CD4-positive, alpha-beta memory T cell (primary cell): ENCODE measurements at regions of chr12 and their contacts with region 1.

Region 1: GRCh38 chr12:8078398-8078797 is 3.7 kb upstream of the NECAP1 start:
- DNase-seq: peak; percentile 74 to 84 (median 79)
- H3K4me3 ChIP-seq: no peak overlapping the region
- H3K4me3 Mint-ChIP-seq: peak overlapping the region in 4 of 8 donors; percentile 12 to 45 (median 16)
- H3K27ac ChIP-seq: peak overlapping the region; percentile 35
- H3K27ac Mint-ChIP-seq: peak overlapping the region; percentile 55 to 98 (median 92)
- H3K4me1 ChIP-seq: peaks cover 35% of the 10 kb centered on the region
- H3K4me1 Mint-ChIP-seq: peaks cover 28 to 66% (median 40%) of the 10 kb centered on the region in 4 donors
- H3K27me3 ChIP-seq: no peaks in the 10 kb centered on the region
- H3K27me3 Mint-ChIP-seq: peaks cover 0 to 2% of the 10 kb centered on the region in 2 donors

Region 2: DNA sequence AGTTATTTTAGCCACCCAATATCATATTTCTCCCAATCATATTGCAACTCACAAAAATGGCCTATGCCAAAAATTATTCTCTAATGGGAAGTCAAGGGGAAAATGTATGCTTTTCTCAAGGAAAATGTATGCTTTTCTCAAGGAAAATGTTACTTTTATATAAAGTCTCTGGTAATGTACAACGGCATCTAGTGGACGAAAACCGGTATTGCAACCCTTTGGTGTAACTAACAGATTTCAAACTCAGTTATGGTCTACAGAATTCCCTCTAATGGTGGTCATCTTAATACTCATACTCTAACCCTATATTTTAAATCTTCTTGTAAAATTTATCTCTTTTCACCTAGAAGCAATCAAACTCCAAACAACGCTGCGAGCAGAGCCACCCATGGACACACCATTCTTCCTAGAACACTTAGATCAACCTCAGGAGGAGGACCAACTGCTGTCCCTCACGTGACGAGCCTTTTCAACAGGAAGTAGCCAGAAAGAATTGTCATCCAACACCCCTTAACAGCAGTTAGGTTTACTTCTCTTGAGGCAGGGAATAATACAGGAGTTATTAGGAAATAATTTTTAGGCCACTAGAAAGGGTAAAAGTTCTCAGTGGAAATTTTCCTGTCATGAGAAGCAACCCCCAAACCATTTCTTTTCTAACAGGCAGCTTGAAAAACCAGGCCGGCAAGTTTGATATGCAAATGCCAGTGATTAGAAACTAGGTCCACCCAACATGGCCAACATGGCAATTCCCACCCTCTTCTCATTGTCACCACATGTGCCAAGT is 432.8 kb before region 1 on chr12:
- CTCF ChIA-PET with region 1: interaction called, 3 read pairs
- POLR2A ChIA-PET with region 1: no interaction called
- intact Hi-C with region 1: loop called (anchors 5 kb)
- DNase-seq: peak in 4 of 5 donors; percentile 24 to 32 (median 30)
- H3K4me3 ChIP-seq: no peak overlapping the region
- H3K4me3 Mint-ChIP-seq: no peak overlapping the region
- H3K27ac ChIP-seq: no peak overlapping the region
- H3K27ac Mint-ChIP-seq: no peak overlapping the region
- H3K4me1 ChIP-seq: peaks cover 11% of the 10 kb centered on the region
- H3K4me1 Mint-ChIP-seq: peaks cover 8 to 15% (median 9%) of the 10 kb centered on the region in 4 donors
- H3K27me3 ChIP-seq: no peaks in the 10 kb centered on the region
- H3K27me3 Mint-ChIP-seq: no peaks in the 10 kb centered on the region

Region 3: GRCh38 chr12:7933255-7933729 is 145.1 kb before region 1 on chr12:
- CTCF ChIA-PET with region 1: interaction called, 35 read pairs
- POLR2A ChIA-PET with region 1: interaction called, 10 read pairs
- intact Hi-C with region 1: loop called (anchors 1 kb)
- DNase-seq: peak; percentile 82 to 87 (median 86)
- H3K4me3 ChIP-seq: peak overlapping the region; percentile 84 to 87
- H3K4me3 Mint-ChIP-seq: no peak overlapping the region
- H3K27ac ChIP-seq: peak overlapping the region; percentile 90
- H3K27ac Mint-ChIP-seq: no peak overlapping the region
- H3K4me1 ChIP-seq: peaks cover 68% of the 10 kb centered on the region
- H3K4me1 Mint-ChIP-seq: peaks cover 22 to 39% (median 30%) of the 10 kb centered on the region in 4 donors
- H3K27me3 ChIP-seq: no peaks in the 10 kb centered on the region
- H3K27me3 Mint-ChIP-seq: no peaks in the 10 kb centered on the region

Region 4: GRCh38 chr12:7995266-7995963 is 83.0 kb before region 1 on chr12:
- CTCF ChIA-PET with region 1: interaction called, 17 read pairs
- POLR2A ChIA-PET with region 1: interaction called, 4 read pairs
- intact Hi-C with region 1: loop called (anchors 1 kb)
- DNase-seq: peak; percentile 81 to 90 (median 86)
- H3K4me3 ChIP-seq: no peak overlapping the region
- H3K4me3 Mint-ChIP-seq: no peak overlapping the region
- H3K27ac ChIP-seq: peak overlapping the region; percentile 1
- H3K27ac Mint-ChIP-seq: no peak overlapping the region
- H3K4me1 ChIP-seq: peaks cover 27% of the 10 kb centered on the region
- H3K4me1 Mint-ChIP-seq: peaks cover 9 to 14% (median 12%) of the 10 kb centered on the region in 4 donors
- H3K27me3 ChIP-seq: no peaks in the 10 kb centered on the region
- H3K27me3 Mint-ChIP-seq: no peaks in the 10 kb centered on the region

Region 5: GRCh38 chr12:8032242-8033152 is 45.9 kb before region 1 on chr12 and contains the start of gene FOXJ2:
- CTCF ChIA-PET with region 1: interaction called, 85 read pairs
- POLR2A ChIA-PET with region 1: interaction called, 23 read pairs
- intact Hi-C with region 1: loop called (anchors 1 kb)
- DNase-seq: peak; percentile 75 to 84 (median 82)
- H3K4me3 ChIP-seq: peak within 1 kb of the TSS; percentile 87 to 95
- H3K4me3 Mint-ChIP-seq: peak within 1 kb of the TSS; percentile 88 to 94 (median 90)
- H3K27ac ChIP-seq: peak within 1 kb of the TSS; percentile 97
- H3K27ac Mint-ChIP-seq: peak within 1 kb of the TSS; percentile 93 to 97 (median 96)
- H3K4me1 ChIP-seq: peaks cover 57% of the 10 kb centered on the region
- H3K4me1 Mint-ChIP-seq: peaks cover 41 to 56% (median 52%) of the 10 kb centered on the region in 4 donors
- H3K27me3 ChIP-seq: no peaks in the 10 kb centered on the region
- H3K27me3 Mint-ChIP-seq: no peaks in the 10 kb centered on the region
- total RNA-seq, gene FOXJ2: 32.4 to 33.4 TPM

Region 6: DNA sequence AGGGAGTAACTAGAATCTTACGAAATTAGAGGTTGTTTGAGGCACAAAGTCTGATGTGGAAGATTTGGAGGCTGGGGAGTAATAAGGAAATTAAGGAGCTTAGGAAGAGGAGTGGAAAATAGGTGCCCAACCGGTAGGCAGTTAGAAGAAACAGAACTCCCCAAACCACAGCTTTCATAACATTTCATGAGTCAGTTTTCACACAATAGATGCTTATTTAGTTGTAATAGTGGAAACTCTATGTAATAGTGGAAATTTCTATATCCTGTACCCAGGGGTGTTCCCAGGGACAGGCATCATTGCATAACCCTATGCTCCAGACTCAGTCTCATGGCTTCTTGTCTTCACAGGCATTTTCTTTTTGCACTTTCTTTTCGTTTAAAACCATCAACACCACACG is 20.6 kb before region 1 on chr12:
- CTCF ChIA-PET with region 1: interaction called, 18 read pairs
- POLR2A ChIA-PET with region 1: interaction called, 4 read pairs
- intact Hi-C with region 1: no loop called
- DNase-seq: no peak
- H3K4me3 ChIP-seq: no peak overlapping the region
- H3K4me3 Mint-ChIP-seq: no peak overlapping the region
- H3K27ac ChIP-seq: no peak overlapping the region
- H3K27ac Mint-ChIP-seq: peak overlapping the region in 5 of 7 donors; percentile 22 to 92 (median 45)
- H3K4me1 ChIP-seq: no peaks in the 10 kb centered on the region
- H3K4me1 Mint-ChIP-seq: peaks cover 0 to 6% (median under 1%) of the 10 kb centered on the region in 4 donors
- H3K27me3 ChIP-seq: no peaks in the 10 kb centered on the region
- H3K27me3 Mint-ChIP-seq: no peaks in the 10 kb centered on the region

Region 7: GRCh38 chr12:8088574-8088973 is 10.2 kb after region 1 on chr12:
- CTCF ChIA-PET with region 1: interaction called, 12 read pairs
- POLR2A ChIA-PET with region 1: interaction called, 6 read pairs
- intact Hi-C with region 1: no loop called
- DNase-seq: peak; percentile 35 to 65 (median 52)
- H3K4me3 ChIP-seq: peak overlapping the region in 1 of 2 donors; percentile 26
- H3K4me3 Mint-ChIP-seq: peak overlapping the region; percentile 70 to 86 (median 82)
- H3K27ac ChIP-seq: peak overlapping the region; percentile 58
- H3K27ac Mint-ChIP-seq: peak overlapping the region; percentile 85 to 96 (median 94)
- H3K4me1 ChIP-seq: peaks cover 60% of the 10 kb centered on the region
- H3K4me1 Mint-ChIP-seq: peaks cover 37 to 59% (median 41%) of the 10 kb centered on the region in 4 donors
- H3K27me3 ChIP-seq: no peaks in the 10 kb centered on the region
- H3K27me3 Mint-ChIP-seq: no peaks in the 10 kb centered on the region